Activated CD8-positive, alpha-beta T cell treated with anti-CD3 and anti-CD28 coated beads for 36 hours (primary cell): ENCODE measurements at regions of chr6 and their contacts with region 1.

Region 1: DNA sequence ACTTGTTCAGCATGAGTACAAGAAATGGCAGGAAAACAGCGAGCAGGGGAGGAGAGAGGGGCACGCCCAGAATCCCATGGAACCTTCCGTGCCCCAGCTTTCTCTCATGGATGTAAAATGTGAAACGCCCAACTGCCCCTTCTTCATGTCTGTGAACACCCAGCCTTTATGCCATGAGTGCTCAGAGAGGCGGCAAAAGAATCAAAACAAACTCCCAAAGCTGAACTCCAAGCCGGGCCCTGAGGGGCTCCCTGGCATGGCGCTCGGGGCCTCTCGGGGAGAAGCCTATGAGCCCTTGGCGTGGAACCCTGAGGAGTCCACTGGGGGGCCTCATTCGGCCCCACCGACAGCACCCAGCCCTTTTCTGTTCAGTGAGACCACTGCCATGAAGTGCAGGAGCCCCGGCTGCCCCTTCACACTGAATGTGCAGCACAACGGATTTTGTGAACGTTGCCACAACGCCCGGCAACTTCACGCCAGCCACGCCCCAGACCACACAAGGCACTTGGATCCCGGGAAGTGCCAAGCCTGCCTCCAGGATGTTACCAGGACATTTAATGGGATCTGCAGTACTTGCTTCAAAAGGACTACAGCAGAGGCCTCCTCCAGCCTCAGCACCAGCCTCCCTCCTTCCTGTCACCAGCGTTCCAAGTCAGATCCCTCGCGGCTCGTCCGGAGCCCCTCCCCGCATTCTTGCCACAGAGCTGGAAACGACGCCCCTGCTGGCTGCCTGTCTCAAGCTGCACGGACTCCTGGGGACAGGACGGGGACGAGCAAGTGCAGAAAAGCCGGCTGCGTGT is 11.6 kb downstream of the TNFAIP3 start:
- DNase-seq: no peak
- ATAC-seq: no peak
- H3K4me3 Mint-ChIP-seq: peak overlapping the region; percentile 98
- H3K27ac Mint-ChIP-seq: peak overlapping the region; percentile 95
- H3K4me1 Mint-ChIP-seq: peaks cover 90% of the 10 kb centered on the region
- H3K27me3 Mint-ChIP-seq: no peaks in the 10 kb centered on the region
- CTCF ChIP-seq: no peak

Region 2: GRCh38 chr6:137892271-137892708 is 13.6 kb after region 1 on chr6:
- CTCF ChIA-PET with region 1: interaction called, 4 read pairs
- POLR2A ChIA-PET with region 1: interaction called, 26 read pairs
- intact Hi-C with region 1: no loop called
- DNase-seq: no peak
- ATAC-seq: no peak
- H3K4me3 Mint-ChIP-seq: no peak overlapping the region
- H3K27ac Mint-ChIP-seq: no peak overlapping the region
- H3K4me1 Mint-ChIP-seq: peaks cover 22% of the 10 kb centered on the region
- H3K27me3 Mint-ChIP-seq: no peaks in the 10 kb centered on the region
- CTCF ChIP-seq: no peak

Region 3: DNA sequence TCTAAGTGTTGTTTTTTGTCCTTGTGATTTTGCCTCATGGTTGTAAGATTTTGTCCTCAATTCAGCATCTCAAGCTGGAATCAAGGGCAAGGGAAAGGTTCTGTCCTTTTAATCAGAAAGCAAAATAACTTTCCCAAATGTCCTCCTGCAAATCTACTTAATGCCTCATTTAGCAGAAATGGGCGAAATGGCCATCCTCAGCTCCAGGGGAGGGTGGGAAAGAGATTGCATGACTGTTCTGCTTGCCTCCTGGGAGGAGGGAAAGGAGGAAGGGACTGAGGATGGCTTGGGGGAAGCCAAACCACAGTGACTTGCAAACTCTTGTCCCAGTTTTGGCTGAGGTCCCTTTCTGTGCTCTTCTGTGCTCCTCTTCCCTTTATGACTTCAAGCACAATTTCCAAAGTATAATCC is 31.7 kb after region 1 on chr6:
- CTCF ChIA-PET with region 1: no interaction called
- POLR2A ChIA-PET with region 1: interaction called, 13 read pairs
- intact Hi-C with region 1: loop called (anchors 2 kb)
- DNase-seq: no peak
- ATAC-seq: no peak
- H3K4me3 Mint-ChIP-seq: no peak overlapping the region
- H3K27ac Mint-ChIP-seq: peak overlapping the region; percentile 60
- H3K4me1 Mint-ChIP-seq: peaks cover 55% of the 10 kb centered on the region
- H3K27me3 Mint-ChIP-seq: no peaks in the 10 kb centered on the region
- CTCF ChIP-seq: no peak

Region 4: DNA sequence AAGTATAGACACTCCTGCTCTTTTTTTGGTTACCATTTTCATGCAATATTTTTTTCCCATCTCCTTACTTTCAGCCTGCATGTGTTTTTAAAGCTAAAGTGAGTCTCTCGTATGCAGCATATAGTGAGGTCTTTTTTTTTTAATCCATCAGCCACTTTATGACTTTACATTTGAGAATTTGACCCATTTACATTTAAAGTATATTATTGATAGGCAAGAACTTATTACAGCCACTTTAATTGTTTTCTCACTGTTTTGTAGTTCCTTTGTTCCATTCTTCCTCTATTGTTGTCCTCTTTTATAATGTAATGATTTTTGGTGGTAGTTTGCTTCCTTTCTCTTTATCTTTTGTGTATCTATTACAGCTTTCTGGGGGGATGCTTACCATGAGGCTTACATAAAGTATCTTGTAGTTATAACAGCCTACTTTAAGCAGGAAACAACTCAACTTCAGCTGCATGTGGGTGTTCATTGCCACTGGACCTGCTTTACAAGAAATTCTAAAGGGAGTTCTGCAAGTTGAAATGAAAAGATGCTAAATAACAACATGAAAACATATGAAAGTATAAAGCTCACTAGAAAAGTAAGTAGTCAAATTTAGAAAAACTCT is 60.2 kb after region 1 on chr6:
- CTCF ChIA-PET with region 1: interaction called, 360 read pairs
- POLR2A ChIA-PET with region 1: interaction called, 6 read pairs
- intact Hi-C with region 1: loop called (anchors 2 kb)
- DNase-seq: no peak
- ATAC-seq: no peak
- H3K4me3 Mint-ChIP-seq: peak overlapping the region; percentile 39
- H3K27ac Mint-ChIP-seq: peak overlapping the region; percentile 92
- H3K4me1 Mint-ChIP-seq: peaks cover 44% of the 10 kb centered on the region
- H3K27me3 Mint-ChIP-seq: no peaks in the 10 kb centered on the region
- CTCF ChIP-seq: no peak

Region 5: GRCh38 chr6:137975188-137975940 is 96.7 kb after region 1 on chr6:
- CTCF ChIA-PET with region 1: interaction called, 80 read pairs
- POLR2A ChIA-PET with region 1: interaction called, 6 read pairs
- intact Hi-C with region 1: no loop called
- DNase-seq: peak; percentile 64
- ATAC-seq: peak; percentile 69
- H3K4me3 Mint-ChIP-seq: peak overlapping the region; percentile 70
- H3K27ac Mint-ChIP-seq: peak overlapping the region; percentile 94
- H3K4me1 Mint-ChIP-seq: peaks cover 70% of the 10 kb centered on the region
- H3K27me3 Mint-ChIP-seq: no peaks in the 10 kb centered on the region
- CTCF ChIP-seq: peak; percentile 82